ENCODE measurements at regions of chr12 and their contacts with region 1.

Region 1: GRCh38 chr12:110698171-110698902 is 9.4 kb upstream of the HVCN1 start:
- DNase-seq: peak; percentile 81 to 82
- H3K4me3 ChIP-seq: no peak overlapping the region
- H3K4me3 Mint-ChIP-seq: no peak overlapping the region
- H3K27ac Mint-ChIP-seq: no peak overlapping the region
- H3K4me1 ChIP-seq: no peaks in the 10 kb centered on the region
- H3K4me1 Mint-ChIP-seq: no peaks in the 10 kb centered on the region
- H3K27me3 ChIP-seq: no peaks in the 10 kb centered on the region
- H3K27me3 Mint-ChIP-seq: no peaks in the 10 kb centered on the region
- CTCF ChIP-seq: peak; percentile 79 to 83

Region 2: DNA sequence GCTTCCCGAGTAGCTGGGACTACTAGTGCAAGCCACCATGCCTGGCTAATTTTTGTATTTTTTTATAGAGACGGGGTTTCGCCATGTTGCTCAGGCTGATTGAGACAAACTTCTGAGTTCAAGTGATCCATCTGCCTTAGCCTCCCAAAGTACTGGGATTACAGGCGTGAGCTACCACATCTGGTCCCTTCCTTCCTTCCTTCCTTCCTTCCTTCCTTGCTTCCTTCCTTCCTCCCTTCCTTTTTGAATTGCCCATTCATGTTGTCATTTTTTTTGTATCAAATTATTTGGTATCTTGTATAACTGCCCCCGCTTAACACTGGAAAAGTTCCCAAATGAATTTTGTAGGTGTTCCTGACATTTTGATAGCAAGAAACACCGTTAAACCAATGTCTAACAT is 184.5 kb before region 1 on chr12:
- CTCF ChIA-PET with region 1: no interaction called
- POLR2A ChIA-PET with region 1: no interaction called
- intact Hi-C with region 1: loop called (anchors 5 kb)
- DNase-seq: no peak
- H3K4me3 ChIP-seq: no peak overlapping the region
- H3K4me3 Mint-ChIP-seq: no peak overlapping the region
- H3K27ac Mint-ChIP-seq: no peak overlapping the region
- H3K4me1 ChIP-seq: no peaks in the 10 kb centered on the region
- H3K4me1 Mint-ChIP-seq: no peaks in the 10 kb centered on the region
- H3K27me3 ChIP-seq: no peaks in the 10 kb centered on the region
- H3K27me3 Mint-ChIP-seq: no peaks in the 10 kb centered on the region
- CTCF ChIP-seq: no peak

Region 3: DNA sequence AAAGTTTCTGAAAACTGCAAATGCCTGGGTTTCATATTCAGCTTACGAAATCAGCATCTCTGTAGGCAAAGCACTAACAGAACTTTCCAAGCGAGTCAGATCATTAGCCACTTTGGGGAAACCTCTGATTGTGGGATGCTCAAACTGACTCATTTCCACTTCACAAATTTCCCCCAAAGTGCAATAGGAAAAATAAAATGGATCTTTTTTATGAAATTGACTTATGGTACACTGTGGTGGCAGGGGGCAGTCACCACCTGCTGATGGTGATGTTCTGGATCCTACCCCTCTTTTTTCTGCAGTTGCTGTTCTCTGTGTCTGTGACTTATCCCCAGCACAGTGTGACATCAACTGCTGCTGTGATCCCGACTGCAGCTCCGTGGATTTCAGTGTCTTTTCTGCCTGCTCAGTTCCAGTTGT is 78.8 kb before region 1 on chr12:
- CTCF ChIA-PET with region 1: no interaction called
- POLR2A ChIA-PET with region 1: no interaction called
- intact Hi-C with region 1: loop called (anchors 1 kb)
- DNase-seq: no peak
- H3K4me3 ChIP-seq: no peak overlapping the region
- H3K4me3 Mint-ChIP-seq: no peak overlapping the region
- H3K27ac Mint-ChIP-seq: no peak overlapping the region
- H3K4me1 ChIP-seq: no peaks in the 10 kb centered on the region
- H3K4me1 Mint-ChIP-seq: no peaks in the 10 kb centered on the region
- H3K27me3 ChIP-seq: no peaks in the 10 kb centered on the region
- H3K27me3 Mint-ChIP-seq: no peaks in the 10 kb centered on the region
- CTCF ChIP-seq: no peak

Measured in Caco-2 (cell line).